Caki2 (cell line): ENCODE measurements at regions of chr1 and their contacts with region 1.

Region 1: DNA sequence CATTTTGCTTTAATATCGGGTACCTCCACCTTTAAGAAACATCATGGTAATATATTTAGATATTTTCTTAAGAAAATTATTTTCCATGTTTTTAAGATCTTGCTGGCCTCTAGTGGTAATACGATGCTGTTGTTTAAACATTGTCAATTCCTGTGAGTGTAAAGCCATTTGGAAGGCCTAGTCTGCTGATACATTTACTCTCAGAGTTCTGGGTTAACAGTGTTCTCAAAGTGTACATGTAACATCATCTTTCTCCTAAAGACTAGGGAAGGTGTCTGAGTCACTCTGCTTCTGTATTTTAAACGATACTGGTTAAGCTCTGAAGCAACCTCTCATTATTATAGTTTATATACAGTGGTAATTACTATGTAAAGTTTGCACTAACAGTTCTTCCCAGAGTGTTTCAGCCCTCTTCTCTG is 189.1 kb downstream of the RASAL2 start:
- DNase-seq: peak; percentile 34

Region 2: GRCh38 chr1:178093205-178093957 is 189.6 kb before region 1 on chr1:
- in situ Hi-C with region 1: loop called (anchors 25 kb)
- DNase-seq: peak; percentile 87